CD4-positive, alpha-beta T cell (primary cell): ENCODE measurements at regions of chrX and their contacts with region 1.

Region 1: DNA sequence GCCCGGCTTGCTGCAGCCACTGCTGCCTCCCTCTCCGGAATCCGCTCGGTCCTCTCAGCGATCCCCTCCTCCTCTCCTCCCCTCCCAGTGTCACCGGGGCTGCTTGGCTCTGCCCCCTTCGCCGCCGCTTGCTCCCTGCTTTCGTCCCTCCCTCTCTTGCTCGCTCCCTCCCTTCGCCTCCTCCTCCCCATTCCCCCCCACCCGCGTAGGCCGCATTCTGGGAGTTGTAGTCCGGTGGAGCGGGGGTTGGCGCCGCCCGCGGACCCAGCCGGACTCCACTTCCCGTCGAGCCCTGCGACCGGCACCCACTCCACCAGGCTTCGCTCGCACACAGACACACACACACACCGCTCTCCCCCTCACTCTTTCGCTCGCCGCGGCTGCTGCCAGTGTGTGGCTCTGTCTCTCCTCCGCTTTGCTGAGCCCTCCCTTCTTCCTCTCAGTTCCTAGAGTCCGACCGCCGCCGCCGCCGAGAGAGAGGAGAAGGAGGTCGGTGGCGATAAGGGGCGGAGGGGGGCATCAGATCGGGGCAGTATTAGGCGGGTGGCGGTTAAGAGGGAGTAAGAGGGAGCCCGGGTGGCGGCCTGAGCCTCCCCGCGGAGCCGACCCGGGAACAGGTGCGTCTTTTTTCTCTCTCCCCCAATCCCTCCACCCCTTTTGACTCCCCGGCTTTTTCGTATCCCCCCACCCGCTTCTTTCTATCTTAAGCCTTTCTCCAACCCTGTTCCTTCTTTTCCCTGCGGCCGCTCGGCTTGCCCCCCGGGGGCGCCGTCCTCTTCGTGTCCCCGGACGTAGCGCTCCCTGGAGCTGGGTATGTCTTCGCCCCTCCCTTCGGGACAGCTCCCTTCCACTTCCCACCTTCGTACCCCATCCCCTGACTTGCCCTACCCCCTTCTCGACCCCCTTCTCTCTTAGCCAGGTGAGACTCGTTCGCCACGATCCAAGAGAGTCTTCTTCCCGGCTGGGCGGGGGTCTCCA is at the start of gene BCORL1:
- DNase-seq: peak; percentile 79 to 96 (median 84)
- ATAC-seq: peak; percentile 91
- H3K4me3 ChIP-seq: no peak within 1 kb of the TSS
- H3K4me3 Mint-ChIP-seq: no peak within 1 kb of the TSS
- H3K27ac ChIP-seq: no peak within 1 kb of the TSS
- H3K27ac Mint-ChIP-seq: peak within 1 kb of the TSS; percentile 74
- H3K4me1 ChIP-seq: peaks cover 34% of the 10 kb centered on the region
- H3K4me1 Mint-ChIP-seq: peaks cover 38% of the 10 kb centered on the region
- H3K27me3 ChIP-seq: no peaks in the 10 kb centered on the region
- H3K27me3 Mint-ChIP-seq: no peaks in the 10 kb centered on the region
- CTCF ChIP-seq: no peak
- total RNA-seq, gene BCORL1: 3.4 to 3.5 TPM

Region 2: GRCh38 chrX:129953881-129954280 is 28.7 kb before region 1 on chrX:
- CTCF ChIA-PET with region 1: no interaction called
- POLR2A ChIA-PET with region 1: interaction called, 8 read pairs
- intact Hi-C with region 1: loop called in 1 of 2 experiments (anchors 2 kb)
- DNase-seq: no peak
- ATAC-seq: no peak
- H3K4me3 ChIP-seq: no peak overlapping the region
- H3K4me3 Mint-ChIP-seq: peak overlapping the region; percentile 77
- H3K27ac ChIP-seq: no peak overlapping the region
- H3K27ac Mint-ChIP-seq: peak overlapping the region; percentile 96
- H3K4me1 ChIP-seq: peaks cover 27% of the 10 kb centered on the region
- H3K4me1 Mint-ChIP-seq: peaks cover 11% of the 10 kb centered on the region
- H3K27me3 ChIP-seq: no peaks in the 10 kb centered on the region
- H3K27me3 Mint-ChIP-seq: peaks cover 4% of the 10 kb centered on the region
- CTCF ChIP-seq: no peak

Region 3: DNA sequence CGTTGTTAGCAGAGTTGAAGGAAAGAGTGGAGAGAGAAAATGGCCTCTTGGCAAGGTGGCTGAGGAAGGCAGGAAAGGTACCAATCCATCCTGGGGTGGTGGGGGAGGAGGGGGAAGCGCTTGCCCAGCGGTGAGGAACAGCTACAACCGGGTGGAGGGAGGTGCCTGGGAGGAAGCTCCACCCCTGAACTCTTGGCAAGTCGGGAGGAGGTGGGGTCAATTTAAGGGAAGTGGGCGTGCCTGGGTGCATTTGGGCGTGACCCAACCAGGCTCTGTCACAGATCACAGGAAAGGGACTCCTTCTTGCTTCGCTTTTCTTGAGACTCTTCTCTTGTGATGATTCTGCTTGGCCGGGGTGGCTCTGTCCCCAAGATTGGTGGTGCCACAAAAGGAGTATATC is 41.6 kb after region 1 on chrX:
- CTCF ChIA-PET with region 1: no interaction called
- POLR2A ChIA-PET with region 1: interaction called, 3 read pairs
- intact Hi-C with region 1: loop called in 1 of 2 experiments (anchors 2 kb)
- DNase-seq: peak; percentile 57 to 92 (median 78)
- ATAC-seq: peak; percentile 100
- H3K4me3 ChIP-seq: no peak overlapping the region
- H3K4me3 Mint-ChIP-seq: no peak overlapping the region
- H3K27ac ChIP-seq: no peak overlapping the region
- H3K27ac Mint-ChIP-seq: peak overlapping the region; percentile 24
- H3K4me1 ChIP-seq: peaks cover 12% of the 10 kb centered on the region
- H3K4me1 Mint-ChIP-seq: peaks cover 17% of the 10 kb centered on the region
- H3K27me3 ChIP-seq: no peaks in the 10 kb centered on the region
- H3K27me3 Mint-ChIP-seq: no peaks in the 10 kb centered on the region
- CTCF ChIP-seq: no peak